Panc1 (cell line): ENCODE measurements at regions of chr6 and their contacts with region 1.

Region 1: DNA sequence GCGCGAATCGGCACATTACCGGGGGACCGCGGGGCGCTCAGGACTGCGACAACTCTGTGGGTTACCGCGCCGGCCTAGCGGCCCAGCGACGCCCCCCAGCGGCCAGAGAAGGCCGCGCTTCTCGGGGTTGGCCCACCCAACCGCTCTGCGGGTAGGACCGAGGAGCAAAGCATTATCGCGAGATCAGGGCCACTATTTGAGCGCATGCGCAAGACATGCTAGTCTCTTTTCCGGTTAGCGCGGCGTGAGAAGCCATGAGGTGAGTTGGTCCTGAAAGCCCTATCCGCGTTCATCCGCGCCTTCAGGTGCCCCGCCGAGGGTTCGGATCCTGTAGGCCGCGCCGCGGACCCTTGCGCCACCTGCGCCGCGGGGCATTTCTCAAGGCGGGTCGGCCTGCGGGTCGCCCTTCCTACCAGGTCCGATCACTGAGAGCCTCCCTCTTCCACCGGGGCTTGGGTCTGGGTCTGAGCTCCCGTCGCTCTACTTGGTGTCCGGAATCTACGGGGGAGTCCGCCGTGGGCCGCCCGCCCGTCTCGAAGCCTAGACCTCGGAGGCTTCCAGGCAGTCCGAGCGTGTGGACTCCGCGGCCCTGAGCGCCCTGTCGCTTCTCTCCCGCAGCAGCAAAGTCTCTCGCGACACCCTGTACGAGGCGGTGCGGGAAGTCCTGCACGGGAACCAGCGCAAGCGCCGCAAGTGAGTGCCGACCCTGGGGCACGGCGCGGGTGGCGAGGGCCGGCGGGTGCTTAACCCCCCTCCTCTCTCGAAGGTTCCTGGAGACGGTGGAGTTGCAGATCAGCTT is at the start of gene RPL10A:
- DNase-seq: peak; percentile 87
- ATAC-seq: peak; percentile 90
- H3K4me3 ChIP-seq: peak within 1 kb of the TSS; percentile 95
- H3K27ac ChIP-seq: peak within 1 kb of the TSS; percentile 85
- H3K4me1 ChIP-seq: peaks cover 37% of the 10 kb centered on the region
- H3K27me3 ChIP-seq: no peaks in the 10 kb centered on the region
- CTCF ChIP-seq: peak; percentile 99
- total RNA-seq, gene RPL10A: 732 TPM

Region 2: DNA sequence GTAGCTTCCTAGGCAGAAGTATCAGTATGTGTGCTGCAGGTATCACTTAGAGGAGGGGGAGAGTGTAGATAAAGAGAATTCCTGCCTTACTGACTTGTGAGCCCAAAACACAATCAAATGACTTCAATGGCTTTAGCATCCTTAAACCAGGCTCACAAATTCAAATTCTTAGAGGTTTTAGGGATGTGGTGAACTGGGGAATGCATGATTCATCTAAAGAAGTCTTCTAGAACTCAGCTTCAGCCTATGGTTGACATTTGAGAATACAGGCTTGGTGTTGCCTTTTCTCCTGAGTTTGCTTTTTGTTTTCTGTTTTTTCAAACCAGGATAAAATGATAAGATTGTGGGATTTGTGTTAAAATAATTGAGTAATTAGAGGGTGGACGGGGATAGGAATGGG is 696.7 kb before region 1 on chr6:
- CTCF ChIA-PET with region 1: no interaction called
- POLR2A ChIA-PET with region 1: no interaction called
- in situ Hi-C with region 1: no loop called
- intact Hi-C with region 1: no loop called
- DNase-seq: no peak
- ATAC-seq: no peak
- H3K4me3 ChIP-seq: no peak overlapping the region
- H3K27ac ChIP-seq: no peak overlapping the region
- H3K4me1 ChIP-seq: no peaks in the 10 kb centered on the region
- H3K27me3 ChIP-seq: no peaks in the 10 kb centered on the region
- CTCF ChIP-seq: no peak

Region 3: DNA sequence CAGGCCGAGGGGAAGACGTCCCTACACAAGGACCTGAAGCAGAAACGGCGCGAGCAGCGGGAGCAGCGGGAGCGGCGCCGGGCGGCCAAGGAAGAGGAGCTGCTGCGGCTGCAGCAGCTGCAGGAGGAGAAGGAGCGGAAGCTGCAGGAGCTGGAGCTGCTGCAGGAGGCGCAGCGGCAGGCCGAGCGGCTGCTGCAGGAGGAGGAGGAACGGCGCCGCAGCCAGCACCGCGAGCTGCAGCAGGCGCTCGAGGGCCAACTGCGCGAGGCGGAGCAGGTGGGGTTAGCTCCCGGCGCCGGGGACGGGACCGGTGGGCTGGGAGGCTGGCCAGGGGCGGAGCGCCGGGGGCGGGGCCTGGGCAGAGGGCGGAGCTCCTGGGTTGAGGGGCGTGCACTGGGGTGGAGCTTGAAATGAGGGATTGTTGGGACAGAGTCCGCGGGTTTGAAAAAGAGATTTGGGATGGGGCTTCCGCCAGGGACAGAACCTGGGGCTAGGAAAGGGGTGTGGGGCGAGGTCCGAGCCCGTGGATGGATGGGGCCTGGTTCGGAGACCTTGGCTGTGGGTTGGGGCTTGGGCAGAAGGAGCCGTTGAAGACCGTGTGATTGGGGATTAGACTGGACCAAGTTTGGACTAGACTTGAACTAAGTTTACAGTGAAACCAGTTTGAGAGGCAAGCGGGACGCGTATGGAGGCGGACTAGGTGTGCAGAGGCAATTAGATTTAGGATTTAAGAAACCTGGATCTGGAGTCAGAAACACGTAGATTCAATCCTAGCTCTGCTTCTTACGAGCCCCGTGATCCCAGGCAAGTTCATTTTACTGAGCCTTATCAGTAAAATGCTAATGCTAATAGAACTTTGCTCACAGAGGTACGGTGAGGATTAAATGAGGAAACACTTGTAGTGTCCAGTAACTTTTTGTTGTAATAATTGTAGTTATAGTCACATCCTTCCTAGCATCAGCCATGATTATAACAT is 149.9 kb before region 1 on chr6:
- CTCF ChIA-PET with region 1: no interaction called
- POLR2A ChIA-PET with region 1: interaction called, 10 read pairs
- in situ Hi-C with region 1: no loop called
- intact Hi-C with region 1: no loop called
- DNase-seq: no peak
- ATAC-seq: peak; percentile 99
- H3K4me3 ChIP-seq: peak overlapping the region; percentile 58 to 77
- H3K27ac ChIP-seq: peak overlapping the region; percentile 54; the same call in 1 of the 2 replicates
- H3K4me1 ChIP-seq: no peaks in the 10 kb centered on the region; the same call in 1 of the 2 replicates
- H3K27me3 ChIP-seq: peaks cover 11% of the 10 kb centered on the region; the same call in 1 of the 2 replicates
- CTCF ChIP-seq: no peak; the same call in 1 of the 2 replicates

Region 4: DNA sequence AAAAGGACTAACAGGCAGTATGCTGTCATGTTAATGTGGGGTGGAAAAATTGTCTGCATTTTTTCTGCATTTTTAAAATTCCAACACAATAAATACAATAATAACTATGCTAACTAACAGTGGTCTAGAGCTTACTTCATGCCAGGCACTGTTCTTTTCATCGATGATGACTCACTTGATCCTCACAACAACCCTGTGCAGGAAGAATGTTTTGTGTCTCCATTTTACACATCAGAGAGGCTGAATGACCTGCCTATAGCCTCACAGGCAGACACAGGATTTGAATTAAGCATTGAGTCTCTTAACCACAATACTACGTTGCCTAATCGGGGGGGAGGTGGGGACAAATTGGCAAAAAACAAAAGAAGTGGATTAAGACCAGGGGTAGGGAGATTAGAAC is 43.1 kb before region 1 on chr6:
- CTCF ChIA-PET with region 1: no interaction called
- POLR2A ChIA-PET with region 1: interaction called, 18 read pairs
- in situ Hi-C with region 1: no loop called
- intact Hi-C with region 1: no loop called
- DNase-seq: no peak
- ATAC-seq: no peak
- H3K4me3 ChIP-seq: no peak overlapping the region
- H3K27ac ChIP-seq: no peak overlapping the region
- H3K4me1 ChIP-seq: no peaks in the 10 kb centered on the region; the same call in 1 of the 2 replicates
- H3K27me3 ChIP-seq: no peaks in the 10 kb centered on the region
- CTCF ChIP-seq: no peak